T-cell (primary cell): ENCODE measurements at regions of chr6 and their contacts with region 1.

Region 1: DNA sequence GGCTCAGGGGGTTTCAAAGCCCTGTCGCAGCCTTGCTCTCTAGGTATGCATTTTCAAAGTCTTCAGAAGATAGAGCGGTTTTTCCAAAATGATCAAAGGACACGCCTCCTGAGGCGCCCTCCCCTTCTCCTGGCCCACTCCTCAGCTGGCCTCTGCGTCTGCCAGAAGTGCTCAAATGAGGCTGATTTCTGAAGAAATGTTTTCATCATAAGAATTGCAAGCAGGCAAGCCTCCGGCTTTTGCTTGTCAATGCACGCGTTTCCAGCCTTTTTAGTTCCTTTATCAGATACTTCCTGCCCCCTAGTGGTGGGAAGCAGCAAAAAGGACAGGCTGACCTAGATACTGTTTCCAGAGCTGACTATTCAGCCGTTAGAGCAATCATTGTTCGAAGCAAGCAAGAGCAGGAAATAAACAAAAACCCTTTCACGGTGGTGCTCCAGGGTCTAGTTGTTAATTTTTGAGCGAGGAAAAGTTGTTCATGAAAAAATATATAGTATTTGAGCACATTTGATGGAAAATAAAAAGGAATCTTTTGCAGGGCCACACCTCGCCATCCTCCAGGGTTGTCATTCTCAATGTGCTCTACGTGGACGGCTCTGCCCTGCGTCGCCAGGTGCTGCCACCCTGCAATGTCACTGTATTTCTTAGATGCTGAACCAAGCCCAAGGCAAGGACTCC is 93.4 kb upstream of the ASF1A start:
- DNase-seq: peak; percentile 60 to 91 (median 81)
- ATAC-seq: peak; percentile 89 to 94 (median 90)
- H3K4me3 ChIP-seq: no peak overlapping the region
- H3K4me3 Mint-ChIP-seq: peak overlapping the region; percentile 43 to 64 (median 60)
- H3K27ac ChIP-seq: peak overlapping the region; percentile 76
- H3K27ac Mint-ChIP-seq: peak overlapping the region; percentile 86 to 90
- H3K4me1 ChIP-seq: peaks cover 0 to 27% of the 10 kb centered on the region in 2 experiments
- H3K4me1 Mint-ChIP-seq: peaks cover 26 to 49% (median 42%) of the 10 kb centered on the region in 3 donors
- H3K27me3 ChIP-seq: no peaks in the 10 kb centered on the region
- H3K27me3 Mint-ChIP-seq: no peaks in the 10 kb centered on the region

Region 2: GRCh38 chr6:118697554-118697953 is 103.0 kb before region 1 on chr6:
- CTCF ChIA-PET with region 1: interaction called, 3 to 11 read pairs
- POLR2A ChIA-PET with region 1: no interaction called
- DNase-seq: peak in 8 of 35 experiments; percentile 7 to 44 (median 16)
- ATAC-seq: peak in 1 of 4 experiments; percentile 43
- H3K4me3 ChIP-seq: no peak overlapping the region
- H3K4me3 Mint-ChIP-seq: no peak overlapping the region
- H3K27ac ChIP-seq: no peak overlapping the region
- H3K27ac Mint-ChIP-seq: no peak overlapping the region
- H3K4me1 ChIP-seq: peaks cover 8 to 11% of the 10 kb centered on the region in 2 experiments
- H3K4me1 Mint-ChIP-seq: peaks cover 76 to 88% (median 88%) of the 10 kb centered on the region in 3 donors
- H3K27me3 ChIP-seq: no peaks in the 10 kb centered on the region
- H3K27me3 Mint-ChIP-seq: no peaks in the 10 kb centered on the region

Region 3: DNA sequence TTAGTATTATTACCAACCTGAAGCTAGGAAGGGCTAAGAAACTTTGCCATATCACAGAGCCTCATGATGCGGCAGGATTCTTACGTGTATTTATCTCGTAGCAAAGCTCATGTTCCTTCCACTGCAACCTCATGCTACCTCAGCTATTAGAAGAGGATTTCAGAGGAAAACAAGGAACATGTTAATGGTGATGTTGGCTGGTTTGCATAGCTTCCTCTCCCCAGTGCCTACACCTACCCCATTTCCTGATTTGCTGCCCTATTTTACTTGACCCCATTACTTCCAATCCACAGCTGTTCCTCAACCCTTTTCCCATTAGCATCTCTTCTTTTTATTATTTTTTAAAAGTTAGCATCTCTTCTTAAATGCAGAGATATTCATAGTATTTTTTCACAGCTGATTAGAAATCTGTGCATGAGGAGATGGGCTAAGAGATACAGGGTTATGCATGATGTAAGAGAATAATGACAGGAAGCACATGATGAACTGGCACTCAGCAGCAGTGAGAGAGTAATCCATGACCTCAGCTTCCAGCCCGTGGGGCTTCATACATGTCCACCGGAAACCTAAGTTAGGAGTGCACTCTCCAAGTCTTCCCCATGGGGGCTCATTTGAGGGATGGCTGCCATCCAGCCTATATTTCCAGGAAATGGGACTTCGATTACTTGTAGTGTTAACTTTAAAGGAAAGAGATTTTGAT is 12.7 kb before region 1 on chr6:
- CTCF ChIA-PET with region 1: interaction called, 5 to 10 read pairs
- POLR2A ChIA-PET with region 1: no interaction called
- DNase-seq: peak in 6 of 35 experiments; percentile 10 to 44 (median 14)
- ATAC-seq: peak; percentile 76 to 91 (median 86)
- H3K4me3 ChIP-seq: no peak overlapping the region
- H3K4me3 Mint-ChIP-seq: no peak overlapping the region
- H3K27ac ChIP-seq: peak overlapping the region; percentile 67
- H3K27ac Mint-ChIP-seq: peak overlapping the region; percentile 83 to 91
- H3K4me1 ChIP-seq: peaks cover 0 to 18% of the 10 kb centered on the region in 2 experiments
- H3K4me1 Mint-ChIP-seq: peaks cover 21 to 32% (median 24%) of the 10 kb centered on the region in 3 donors
- H3K27me3 ChIP-seq: no peaks in the 10 kb centered on the region
- H3K27me3 Mint-ChIP-seq: no peaks in the 10 kb centered on the region